ENCODE measurements at regions of chr17 and their contacts with region 1.

Region 1: DNA sequence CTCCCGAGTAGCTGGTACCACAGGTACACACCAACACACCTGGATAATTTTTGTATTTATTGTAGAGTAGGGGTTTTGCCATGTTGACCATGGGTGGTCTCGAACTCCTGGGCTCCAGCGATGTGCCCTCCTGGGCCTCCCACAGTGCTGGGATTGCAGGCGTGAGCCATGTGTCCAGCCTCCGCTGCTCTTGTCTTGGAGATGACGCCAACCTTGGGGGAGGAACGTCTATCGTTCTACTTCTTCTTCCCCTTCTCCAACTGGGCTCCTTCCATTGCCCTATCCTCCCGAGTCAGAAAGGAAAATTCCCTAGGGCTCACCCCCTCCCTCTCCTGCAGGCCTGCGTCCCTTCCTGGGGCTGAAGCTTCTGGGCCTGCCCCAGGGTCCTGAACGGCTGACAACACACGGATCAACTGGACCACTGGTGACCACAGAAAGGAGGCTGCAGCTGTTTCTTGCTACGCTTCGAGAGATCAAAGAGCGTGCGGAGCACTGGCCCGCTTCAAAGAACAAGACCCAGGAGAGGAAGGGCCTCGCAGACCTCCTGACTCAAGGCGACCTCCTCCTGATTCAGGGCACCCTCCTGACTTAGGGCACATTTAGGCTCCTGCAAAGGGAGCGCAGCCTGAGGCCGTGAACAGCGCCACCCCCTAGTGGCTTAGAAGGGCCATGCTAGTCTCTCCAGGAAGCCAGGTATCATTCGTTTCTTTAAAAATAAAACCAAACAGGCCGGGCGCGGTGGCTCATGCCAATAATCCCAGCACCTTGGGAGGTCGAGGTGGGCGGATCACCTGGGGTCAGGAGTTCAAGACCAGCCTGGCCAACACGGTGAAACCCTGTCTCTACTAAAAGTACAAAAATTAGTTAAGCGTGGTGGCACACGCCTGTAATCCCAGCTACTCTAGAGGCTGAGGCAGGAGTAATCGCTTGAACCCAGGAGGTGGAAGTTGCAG is 48.5 kb upstream of the HELZ start:
- DNase-seq: peak; percentile 72
- ATAC-seq: peak; percentile 96
- H3K4me3 ChIP-seq: peak overlapping the region; percentile 35 to 59 (median 44); a peak in 4 of 6 replicates
- H3K27ac ChIP-seq: no peak overlapping the region
- H3K4me1 ChIP-seq: peaks cover 17% of the 10 kb centered on the region
- H3K27me3 ChIP-seq: no peaks in the 10 kb centered on the region; a peak in 1 of 5 replicates
- CTCF ChIP-seq: peak; percentile 99
- EP300 ChIP-seq: no peak
- POLR2A ChIP-seq: no peak
- RAD21 ChIP-seq: peak; percentile 93

Region 2: DNA sequence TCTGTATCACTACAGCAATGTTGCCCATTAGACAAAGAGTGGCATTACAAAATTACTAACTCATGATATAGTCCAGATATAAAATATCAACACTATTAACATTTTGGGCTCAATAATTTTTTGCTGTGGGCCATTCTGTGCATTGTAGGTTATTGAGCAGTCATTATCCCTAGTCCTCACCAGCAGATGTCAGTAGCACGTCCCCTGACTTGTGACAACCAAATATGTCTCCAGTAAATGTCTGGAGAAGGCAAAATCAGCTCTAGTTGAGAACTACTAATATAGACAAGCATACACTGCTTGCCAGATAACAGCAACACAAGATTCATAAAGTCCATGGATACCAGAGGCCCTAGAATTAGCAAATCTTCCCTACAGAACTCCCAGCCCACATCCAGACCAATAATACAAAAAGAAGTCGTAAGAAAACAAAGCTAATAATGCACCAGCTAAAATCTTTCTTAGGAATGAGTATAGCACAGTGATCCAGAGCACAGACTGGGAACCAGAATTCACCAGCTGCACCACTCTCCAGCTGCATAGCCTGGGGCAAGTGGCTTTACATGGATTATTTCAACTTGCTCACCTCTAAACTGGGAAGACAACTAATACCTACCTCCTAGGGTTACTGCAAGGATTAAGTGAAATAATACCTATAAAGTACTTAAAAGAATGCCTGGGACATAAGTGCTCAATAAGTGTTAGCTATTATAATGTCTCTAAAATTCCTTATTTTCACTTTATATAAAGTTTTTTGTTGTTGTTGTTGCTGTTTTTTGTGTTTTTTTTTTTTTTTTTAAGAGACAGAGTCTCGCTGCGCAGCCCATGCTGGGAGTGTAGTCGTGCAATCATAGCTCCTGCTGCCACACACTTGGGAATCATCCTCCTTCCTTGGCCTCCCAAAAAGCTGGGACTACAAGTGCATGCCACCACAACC is 72.2 kb before region 1 on chr17:
- CTCF ChIA-PET with region 1: interaction called, 8 read pairs
- POLR2A ChIA-PET with region 1: no interaction called
- in situ Hi-C with region 1: no loop called
- intact Hi-C with region 1: loop called (anchors 1 kb)
- DNase-seq: peak; percentile 34
- ATAC-seq: peak; percentile 57
- H3K4me3 ChIP-seq: no peak overlapping the region
- H3K27ac ChIP-seq: no peak overlapping the region
- H3K4me1 ChIP-seq: peaks cover 32% of the 10 kb centered on the region
- H3K27me3 ChIP-seq: no peaks in the 10 kb centered on the region
- CTCF ChIP-seq: peak; percentile 49
- EP300 ChIP-seq: no peak
- POLR2A ChIP-seq: no peak
- RAD21 ChIP-seq: no peak

Region 3: GRCh38 chr17:67245073-67245755 is 48.3 kb before region 1 on chr17 and contains the start of gene HELZ:
- CTCF ChIA-PET with region 1: no interaction called
- POLR2A ChIA-PET with region 1: interaction called, 3 read pairs
- in situ Hi-C with region 1: no loop called
- intact Hi-C with region 1: loop called (anchors 2 kb)
- DNase-seq: peak; percentile 92
- ATAC-seq: peak; percentile 43
- H3K4me3 ChIP-seq: peak within 1 kb of the TSS; percentile 87 to 93 (median 91)
- H3K27ac ChIP-seq: peak within 1 kb of the TSS; percentile 98
- H3K4me1 ChIP-seq: peaks cover 63% of the 10 kb centered on the region
- H3K27me3 ChIP-seq: no peaks in the 10 kb centered on the region; a peak in 1 of 5 replicates
- CTCF ChIP-seq: no peak
- EP300 ChIP-seq: peak in 1 of 2 experiments; percentile 63; a peak in 1 of 4 replicates
- POLR2A ChIP-seq: peak; percentile 71 to 76
- RAD21 ChIP-seq: no peak; the same call in none of the 2 replicates
- total RNA-seq, gene HELZ: 52.4 and 93.1 TPM in 2 replicates

Region 4: DNA sequence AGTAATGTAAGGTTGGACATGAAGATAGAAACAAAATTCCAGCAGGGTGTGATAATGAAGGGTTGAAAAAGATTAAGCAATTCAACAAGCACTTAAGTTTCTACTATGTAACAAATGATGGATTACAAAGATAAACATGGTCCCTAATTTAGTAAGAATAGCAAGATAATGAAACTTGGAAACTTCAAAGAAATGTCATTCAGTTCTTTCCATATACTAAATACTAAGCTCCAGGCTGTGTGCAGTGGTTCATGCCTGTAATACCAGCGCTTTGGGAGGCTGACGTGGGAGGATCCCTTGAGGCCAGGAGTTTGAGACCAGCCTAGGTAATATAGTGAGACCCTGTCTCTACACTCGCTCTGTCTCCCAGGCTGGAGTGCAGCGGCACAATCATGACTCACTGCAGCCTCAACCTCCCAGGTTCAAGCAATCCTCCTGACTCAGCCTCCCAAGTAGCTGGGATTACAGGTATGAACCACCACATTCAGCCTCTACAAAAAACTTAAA is 41.9 kb after region 1 on chr17:
- CTCF ChIA-PET with region 1: no interaction called
- POLR2A ChIA-PET with region 1: no interaction called
- in situ Hi-C with region 1: no loop called
- intact Hi-C with region 1: no loop called
- DNase-seq: no peak
- ATAC-seq: no peak
- H3K4me3 ChIP-seq: no peak overlapping the region
- H3K27ac ChIP-seq: no peak overlapping the region
- H3K4me1 ChIP-seq: peaks cover 59% of the 10 kb centered on the region
- H3K27me3 ChIP-seq: no peaks in the 10 kb centered on the region
- CTCF ChIP-seq: no peak
- EP300 ChIP-seq: no peak
- POLR2A ChIP-seq: no peak
- RAD21 ChIP-seq: no peak

Region 5: DNA sequence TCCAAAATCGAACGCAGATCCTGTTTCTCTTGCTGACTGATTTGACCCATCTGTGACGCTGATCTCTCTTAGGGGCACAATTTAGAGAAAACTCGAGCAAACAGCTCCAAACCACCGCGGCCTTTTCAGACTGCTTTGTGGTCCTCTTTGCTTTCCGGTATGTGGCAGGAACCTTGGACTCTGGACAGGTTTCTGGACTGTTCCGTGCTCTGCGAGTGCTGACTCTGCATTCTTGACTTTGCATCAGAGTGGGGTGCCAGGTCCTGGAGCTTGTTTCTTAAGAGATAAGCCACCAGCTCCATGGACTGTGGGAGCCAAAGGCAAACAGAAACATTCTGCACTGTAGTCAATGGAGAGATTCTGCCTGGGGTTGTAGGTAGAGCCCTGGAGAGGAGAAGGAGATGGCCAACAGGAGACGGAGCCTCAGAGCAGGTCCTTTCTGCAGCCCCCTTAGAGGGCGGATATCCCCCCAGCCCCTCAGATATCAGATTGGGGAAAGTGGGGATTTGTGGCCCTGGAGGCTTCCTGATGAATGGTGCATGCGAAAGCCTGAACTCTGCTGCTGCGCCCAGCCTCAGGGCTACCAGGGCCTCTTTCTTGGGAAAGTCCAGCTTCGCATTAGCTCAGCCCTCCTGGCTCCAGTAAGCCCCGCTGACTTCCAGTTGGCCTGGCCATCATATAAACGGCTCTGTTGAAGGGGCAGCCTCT is 1098.2 kb after region 1 on chr17:
- CTCF ChIA-PET with region 1: no interaction called
- POLR2A ChIA-PET with region 1: no interaction called
- in situ Hi-C with region 1: no loop called
- intact Hi-C with region 1: loop called (anchors 5 kb)
- DNase-seq: peak; percentile 84
- ATAC-seq: peak; percentile 73
- H3K4me3 ChIP-seq: peak overlapping the region in 1 of 3 experiments; percentile 2; a peak in 2 of 6 replicates
- H3K27ac ChIP-seq: peak overlapping the region; percentile 73
- H3K4me1 ChIP-seq: peaks cover 89% of the 10 kb centered on the region
- H3K27me3 ChIP-seq: no peaks in the 10 kb centered on the region
- CTCF ChIP-seq: peak; percentile 9; the same call in 1 of the 2 replicates
- EP300 ChIP-seq: peak in 1 of 2 experiments; percentile 86; a peak in 3 of 4 replicates
- POLR2A ChIP-seq: no peak
- RAD21 ChIP-seq: no peak